Natural killer cell (primary cell): ENCODE measurements at regions of chr16 and their contacts with region 1.

Region 1: GRCh38 chr16:67109407-67110135 is at the start of gene PHAF1:
- DNase-seq: peak; percentile 97
- ATAC-seq: peak; percentile 91 to 97 (median 95)
- H3K4me3 ChIP-seq: peak within 1 kb of the TSS; percentile 75
- H3K4me3 Mint-ChIP-seq: peak within 1 kb of the TSS; percentile 94
- H3K27ac ChIP-seq: peak within 1 kb of the TSS; percentile 31
- H3K27ac Mint-ChIP-seq: peak within 1 kb of the TSS; percentile 65 to 86
- H3K4me1 ChIP-seq: peaks cover 25% of the 10 kb centered on the region
- H3K4me1 Mint-ChIP-seq: peaks cover 34 to 38% of the 10 kb centered on the region in 2 donors
- H3K27me3 ChIP-seq: no peaks in the 10 kb centered on the region
- H3K27me3 Mint-ChIP-seq: no peaks in the 10 kb centered on the region
- CTCF ChIP-seq: no peak
- total RNA-seq, gene PHAF1: 17.0 to 22.4 (median 22.0) TPM

Region 2: GRCh38 chr16:67017810-67018488 is 91.6 kb before region 1 on chr16:
- intact Hi-C with region 1: loop called (anchors 10 kb)
- DNase-seq: peak; percentile 58 to 91
- ATAC-seq: peak; percentile 79 to 87 (median 81)
- H3K4me3 ChIP-seq: no peak overlapping the region
- H3K4me3 Mint-ChIP-seq: no peak overlapping the region
- H3K27ac ChIP-seq: no peak overlapping the region
- H3K27ac Mint-ChIP-seq: no peak overlapping the region
- H3K4me1 ChIP-seq: peaks cover 13% of the 10 kb centered on the region
- H3K4me1 Mint-ChIP-seq: peaks cover 0 to 3% of the 10 kb centered on the region in 2 donors
- H3K27me3 ChIP-seq: peaks cover 13% of the 10 kb centered on the region
- H3K27me3 Mint-ChIP-seq: peaks cover 0 to 17% of the 10 kb centered on the region in 2 donors
- CTCF ChIP-seq: peak; percentile 46

Region 3: DNA sequence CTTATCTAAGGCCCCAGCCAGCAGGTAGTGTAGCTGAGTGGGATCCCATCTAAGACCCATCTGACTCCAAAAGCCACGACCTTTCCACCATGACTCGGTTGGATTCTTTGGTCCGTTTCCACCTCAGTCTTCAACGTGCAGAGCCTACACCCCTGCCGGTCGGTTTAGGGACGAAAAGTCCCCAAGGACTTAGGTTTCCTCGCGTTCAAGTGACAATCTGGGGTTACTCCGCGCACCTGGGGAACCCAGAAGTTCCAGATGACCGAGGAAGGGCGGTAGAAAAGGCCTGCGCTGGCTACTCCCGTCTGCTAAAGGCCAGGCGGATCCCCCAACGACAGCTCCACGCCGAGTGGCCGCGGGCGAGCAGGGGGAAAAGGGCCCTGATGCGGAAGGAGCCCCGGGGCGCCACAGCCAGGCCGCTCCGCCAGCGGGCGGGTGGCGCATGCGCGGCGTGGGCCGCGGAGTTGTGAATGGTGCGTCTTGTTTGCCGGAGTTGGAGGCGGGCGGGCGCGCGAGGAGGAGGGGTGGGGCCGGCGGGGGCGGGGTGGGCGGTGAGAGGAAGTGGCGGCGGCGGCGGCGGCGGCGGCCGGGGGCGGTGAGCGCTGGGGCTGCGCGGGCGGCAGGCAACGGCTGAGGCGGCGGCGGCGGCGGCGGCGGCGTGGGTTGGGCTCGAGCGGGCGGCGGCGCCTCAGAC is 80.9 kb before region 1 on chr16 and contains the start of gene CBFB:
- intact Hi-C with region 1: loop called (anchors 1 kb)
- DNase-seq: peak; percentile 90 to 98
- ATAC-seq: peak; percentile 89 to 95 (median 91)
- H3K4me3 ChIP-seq: peak within 1 kb of the TSS; percentile 55
- H3K4me3 Mint-ChIP-seq: peak within 1 kb of the TSS; percentile 87
- H3K27ac ChIP-seq: peak within 1 kb of the TSS; percentile 96
- H3K27ac Mint-ChIP-seq: peak within 1 kb of the TSS; percentile 89
- H3K4me1 ChIP-seq: peaks cover 18% of the 10 kb centered on the region
- H3K4me1 Mint-ChIP-seq: peaks cover 20 to 29% of the 10 kb centered on the region in 2 donors
- H3K27me3 ChIP-seq: no peaks in the 10 kb centered on the region
- H3K27me3 Mint-ChIP-seq: no peaks in the 10 kb centered on the region
- CTCF ChIP-seq: no peak
- total RNA-seq, gene CBFB: 96.1 to 102 (median 97.2) TPM

Region 4: GRCh38 chr16:67091906-67092566 is 17.5 kb before region 1 on chr16:
- intact Hi-C with region 1: no loop called
- DNase-seq: no peak
- ATAC-seq: no peak
- H3K4me3 ChIP-seq: no peak overlapping the region
- H3K4me3 Mint-ChIP-seq: no peak overlapping the region
- H3K27ac ChIP-seq: no peak overlapping the region
- H3K27ac Mint-ChIP-seq: peak overlapping the region in 1 of 2 donors; percentile 57
- H3K4me1 ChIP-seq: no peaks in the 10 kb centered on the region
- H3K4me1 Mint-ChIP-seq: peaks cover 5 to 15% of the 10 kb centered on the region in 2 donors
- H3K27me3 ChIP-seq: no peaks in the 10 kb centered on the region
- H3K27me3 Mint-ChIP-seq: no peaks in the 10 kb centered on the region
- CTCF ChIP-seq: no peak